A549 (cell line): ENCODE measurements at regions of chr14 and their contacts with region 1.

Region 1: GRCh38 chr14:75560962-75561432 is 17.4 kb upstream of the FLVCR2 start:
- DNase-seq: peak; percentile 87 to 90
- ATAC-seq: peak; percentile 90 to 94
- H3K4me3 ChIP-seq: 0 out of 3 replicates have a peak overlapping the region, but pooled peaks have one; percentile 9
- H3K27ac ChIP-seq: peak overlapping the region; percentile 84 to 90
- H3K4me1 ChIP-seq: peaks cover 27% of the 10 kb centered on the region
- CTCF ChIP-seq: peak; percentile 93
- EP300 ChIP-seq: 0 out of 5 replicates have a peak, but pooled peaks of 1 of the 2 experiments have one; percentile 24
- POLR2A ChIP-seq: no peak
- RAD21 ChIP-seq: peak; percentile 97 to 98

Region 2: DNA sequence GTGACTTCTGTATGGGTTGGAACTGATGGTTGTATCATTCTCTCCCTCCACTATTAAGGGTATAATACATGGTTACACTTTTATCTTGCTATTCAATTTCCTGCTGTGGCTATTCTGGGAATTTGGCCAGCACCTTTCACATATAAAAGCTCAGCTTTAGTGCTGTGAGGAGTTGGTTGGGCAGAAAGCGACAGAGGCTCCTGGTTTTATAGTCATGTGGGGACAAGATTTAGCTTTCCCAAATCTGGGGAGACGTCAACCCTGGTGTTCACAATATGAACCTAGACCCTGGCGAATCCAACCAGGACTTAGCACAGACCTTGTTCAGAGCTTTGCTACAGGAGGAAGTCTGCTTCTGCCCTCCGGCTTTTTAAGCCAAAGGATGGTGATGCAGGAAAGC is 245.9 kb before region 1 on chr14:
- CTCF ChIA-PET with region 1: interaction called, 197 read pairs
- POLR2A ChIA-PET with region 1: no interaction called
- DNase-seq: no peak
- ATAC-seq: no peak
- H3K4me3 ChIP-seq: no peak overlapping the region
- H3K27ac ChIP-seq: peak overlapping the region in 1 of 2 experiments; percentile 38; a peak in 1 of 6 replicates
- H3K4me1 ChIP-seq: peaks cover 15% of the 10 kb centered on the region
- CTCF ChIP-seq: no peak
- EP300 ChIP-seq: no peak
- POLR2A ChIP-seq: no peak
- RAD21 ChIP-seq: no peak

Region 3: DNA sequence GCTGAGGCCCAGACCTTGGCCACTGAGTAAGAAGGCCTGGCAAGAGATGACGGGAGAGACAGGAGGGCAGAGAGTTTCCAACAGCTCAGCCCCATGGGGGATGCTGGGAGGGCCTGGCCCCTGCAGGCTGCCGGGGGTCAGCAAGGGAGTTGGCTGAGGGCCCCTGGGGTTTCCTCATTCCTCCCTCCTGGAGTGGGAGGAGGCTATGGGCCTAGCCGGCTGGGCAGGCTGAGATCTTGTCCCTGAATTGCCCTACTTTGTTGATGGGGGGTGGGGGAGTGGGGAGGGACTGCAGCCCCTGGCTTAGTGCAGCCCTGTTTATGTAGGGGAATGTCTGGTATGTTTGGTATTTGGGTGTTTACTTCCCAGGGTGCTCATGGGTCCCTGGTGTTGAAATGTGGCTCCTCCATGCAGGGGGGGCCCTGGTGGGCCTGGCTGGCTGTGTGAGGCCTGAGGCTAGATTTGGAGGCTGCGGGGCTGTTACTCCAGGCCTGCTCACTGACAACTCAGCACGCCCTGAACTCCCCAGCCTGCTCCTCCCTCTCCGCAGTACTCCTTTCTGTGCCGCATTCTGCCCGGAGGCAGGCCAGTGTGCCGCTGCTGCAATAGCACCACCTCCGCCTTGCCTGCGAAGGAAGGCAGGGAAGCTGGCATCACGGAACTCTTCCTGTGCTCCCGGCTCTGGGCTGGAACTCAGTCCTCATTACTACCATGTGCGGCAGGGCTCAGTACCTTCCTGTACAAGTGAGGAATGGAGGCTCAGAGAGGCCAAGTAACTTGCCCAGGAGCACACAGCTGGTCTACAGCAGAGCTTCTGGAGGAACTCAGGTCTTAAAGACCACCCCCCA is 107.9 kb before region 1 on chr14:
- CTCF ChIA-PET with region 1: interaction called, 17 read pairs
- POLR2A ChIA-PET with region 1: no interaction called
- DNase-seq: peak; percentile 56 to 80
- ATAC-seq: peak; percentile 69 to 84
- H3K4me3 ChIP-seq: 0 out of 3 replicates have a peak overlapping the region, but pooled peaks have one; percentile 6
- H3K27ac ChIP-seq: peak overlapping the region; percentile 73 to 87
- H3K4me1 ChIP-seq: peaks cover 82% of the 10 kb centered on the region
- CTCF ChIP-seq: no peak
- EP300 ChIP-seq: peak in 1 of 2 experiments; percentile 66; a peak in 1 of 5 replicates
- POLR2A ChIP-seq: no peak
- RAD21 ChIP-seq: no peak; a peak in 1 of 5 replicates

Region 4: GRCh38 chr14:75506930-75507329 is 54.1 kb before region 1 on chr14:
- CTCF ChIA-PET with region 1: interaction called, 11 read pairs
- POLR2A ChIA-PET with region 1: no interaction called
- DNase-seq: no peak
- ATAC-seq: no peak
- H3K4me3 ChIP-seq: no peak overlapping the region
- H3K27ac ChIP-seq: no peak overlapping the region
- H3K4me1 ChIP-seq: no peaks in the 10 kb centered on the region
- CTCF ChIP-seq: no peak
- EP300 ChIP-seq: no peak
- POLR2A ChIP-seq: no peak
- RAD21 ChIP-seq: no peak

Region 5: GRCh38 chr14:75542588-75543091 is 18.4 kb before region 1 on chr14:
- CTCF ChIA-PET with region 1: interaction called, 31 read pairs
- POLR2A ChIA-PET with region 1: no interaction called
- DNase-seq: no peak
- ATAC-seq: peak; percentile 18 to 23; a peak in 3 of 6 replicates
- H3K4me3 ChIP-seq: no peak overlapping the region
- H3K27ac ChIP-seq: peak overlapping the region; percentile 69 to 75
- H3K4me1 ChIP-seq: peaks cover 24% of the 10 kb centered on the region
- CTCF ChIP-seq: no peak
- EP300 ChIP-seq: no peak
- POLR2A ChIP-seq: no peak
- RAD21 ChIP-seq: no peak

Region 6: GRCh38 chr14:75654127-75654732 is 93.2 kb after region 1 on chr14:
- CTCF ChIA-PET with region 1: interaction called, 41 read pairs
- POLR2A ChIA-PET with region 1: interaction called, 3 read pairs
- DNase-seq: peak; percentile 66 to 86
- ATAC-seq: peak; percentile 93 to 98
- H3K4me3 ChIP-seq: no peak overlapping the region
- H3K27ac ChIP-seq: peak overlapping the region; percentile 2 to 24; a peak in 1 of 6 replicates
- H3K4me1 ChIP-seq: peaks cover 16% of the 10 kb centered on the region; the same call in 2 of the 3 replicates
- CTCF ChIP-seq: peak; percentile 94
- EP300 ChIP-seq: no peak
- POLR2A ChIP-seq: no peak
- RAD21 ChIP-seq: peak; percentile 91 to 95